Activated CD4-positive, alpha-beta T cell treated with anti-CD3 and anti-CD28 coated beads, Interleukin-2, amount 10 ng/mL, durations not matched to agents 7 days and 5 days (primary cell): ENCODE measurements at regions of chr16 and their contacts with region 1.

Region 1: DNA sequence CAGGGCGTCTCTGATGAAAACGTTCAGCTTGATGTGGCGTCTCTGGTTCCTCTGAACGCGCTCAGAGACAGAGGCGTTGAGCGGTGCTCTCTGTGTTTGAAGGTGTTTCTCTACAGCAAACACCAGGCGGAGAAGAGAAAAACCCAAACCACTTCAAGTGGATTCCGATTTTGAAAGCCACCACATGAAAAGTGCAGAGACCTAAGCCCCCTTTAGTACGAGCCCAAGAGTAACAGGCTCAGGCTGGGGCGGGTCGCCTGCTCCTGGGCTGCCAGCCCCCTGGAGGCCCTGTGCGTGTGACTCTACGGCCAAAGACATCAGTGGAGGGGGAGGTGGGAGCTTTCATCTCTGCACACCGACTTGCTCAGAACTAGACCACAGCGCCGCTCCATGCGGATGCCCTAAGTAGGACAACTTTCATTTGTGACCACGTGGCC is 328.4 kb downstream of the MAF start:
- DNase-seq: peak; percentile 81
- H3K4me3 Mint-ChIP-seq: peak overlapping the region; percentile 50
- H3K27ac Mint-ChIP-seq: peak overlapping the region; percentile 90
- H3K4me1 Mint-ChIP-seq: peaks cover 88% of the 10 kb centered on the region
- H3K27me3 Mint-ChIP-seq: peaks cover 29% of the 10 kb centered on the region

Region 2: DNA sequence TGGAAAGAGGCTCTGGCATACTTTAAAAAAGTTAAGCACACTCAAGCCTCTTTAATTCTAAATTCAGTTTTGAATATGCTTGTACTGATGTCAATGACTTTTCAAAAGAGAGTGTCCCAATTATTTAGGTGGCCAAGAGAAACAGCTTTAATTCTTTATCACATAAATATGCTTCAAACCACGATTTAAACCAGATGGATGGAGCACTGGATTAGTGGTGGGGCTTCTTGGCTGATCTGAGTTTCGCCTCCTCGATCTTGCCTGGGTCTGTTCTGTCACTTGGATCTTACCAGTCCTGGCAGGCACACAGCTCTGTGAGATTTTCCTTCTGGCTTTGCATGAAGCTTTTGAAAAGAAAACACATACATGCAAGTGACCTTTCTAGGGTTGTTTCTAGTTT is 139.5 kb before region 1 on chr16:
- CTCF ChIA-PET with region 1: no interaction called
- POLR2A ChIA-PET with region 1: no interaction called
- DNase-seq: no peak
- H3K4me3 Mint-ChIP-seq: no peak overlapping the region
- H3K27ac Mint-ChIP-seq: no peak overlapping the region
- H3K4me1 Mint-ChIP-seq: no peaks in the 10 kb centered on the region
- H3K27me3 Mint-ChIP-seq: no peaks in the 10 kb centered on the region

Region 3: DNA sequence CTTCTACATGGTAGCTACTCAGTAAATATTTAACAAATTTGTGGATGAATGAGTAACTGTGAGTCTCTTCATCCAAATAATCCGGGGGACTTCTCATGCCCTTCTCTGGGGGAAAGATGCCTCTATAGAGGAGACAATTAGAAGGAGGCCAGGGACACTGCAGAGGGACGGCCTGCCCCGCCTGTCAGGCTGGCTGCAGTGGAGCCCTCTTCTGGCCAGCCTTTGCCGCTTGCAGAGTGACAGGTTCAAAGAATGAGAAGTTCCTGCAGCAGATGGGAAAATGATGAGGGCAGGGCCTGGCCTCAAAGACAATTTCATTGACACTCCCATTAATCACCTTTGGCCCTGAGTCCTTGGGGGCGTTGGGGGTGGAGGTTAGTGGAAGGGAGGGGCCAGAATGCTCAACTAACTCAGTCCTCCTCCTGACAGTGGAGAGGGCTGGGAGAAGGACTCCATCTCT is 10.6 kb before region 1 on chr16:
- CTCF ChIA-PET with region 1: interaction called, 16 read pairs
- POLR2A ChIA-PET with region 1: no interaction called
- DNase-seq: no peak
- H3K4me3 Mint-ChIP-seq: no peak overlapping the region
- H3K27ac Mint-ChIP-seq: no peak overlapping the region
- H3K4me1 Mint-ChIP-seq: peaks cover 3% of the 10 kb centered on the region
- H3K27me3 Mint-ChIP-seq: peaks cover 32% of the 10 kb centered on the region